SK-N-SH (cell line): ENCODE measurements at regions of chr12 and their contacts with region 1.

Region 1: GRCh38 chr12:71685914-71686665 is at the start of gene TMEM19:
- DNase-seq: peak; percentile 91
- H3K4me3 ChIP-seq: peak within 1 kb of the TSS; percentile 69 to 76
- H3K27ac ChIP-seq: peak within 1 kb of the TSS; percentile 86 to 96
- H3K4me1 ChIP-seq: peaks cover 2 to 7% of the 10 kb centered on the region in 2 experiments; a peak in 3 of 4 replicates
- H3K27me3 ChIP-seq: no peaks in the 10 kb centered on the region
- CTCF ChIP-seq: peak; percentile 41
- EP300 ChIP-seq: no peak
- RAD21 ChIP-seq: peak; percentile 46
- polyA plus RNA-seq, gene TMEM19: 12.6 and 17.4 TPM in 2 replicates

Region 2: DNA sequence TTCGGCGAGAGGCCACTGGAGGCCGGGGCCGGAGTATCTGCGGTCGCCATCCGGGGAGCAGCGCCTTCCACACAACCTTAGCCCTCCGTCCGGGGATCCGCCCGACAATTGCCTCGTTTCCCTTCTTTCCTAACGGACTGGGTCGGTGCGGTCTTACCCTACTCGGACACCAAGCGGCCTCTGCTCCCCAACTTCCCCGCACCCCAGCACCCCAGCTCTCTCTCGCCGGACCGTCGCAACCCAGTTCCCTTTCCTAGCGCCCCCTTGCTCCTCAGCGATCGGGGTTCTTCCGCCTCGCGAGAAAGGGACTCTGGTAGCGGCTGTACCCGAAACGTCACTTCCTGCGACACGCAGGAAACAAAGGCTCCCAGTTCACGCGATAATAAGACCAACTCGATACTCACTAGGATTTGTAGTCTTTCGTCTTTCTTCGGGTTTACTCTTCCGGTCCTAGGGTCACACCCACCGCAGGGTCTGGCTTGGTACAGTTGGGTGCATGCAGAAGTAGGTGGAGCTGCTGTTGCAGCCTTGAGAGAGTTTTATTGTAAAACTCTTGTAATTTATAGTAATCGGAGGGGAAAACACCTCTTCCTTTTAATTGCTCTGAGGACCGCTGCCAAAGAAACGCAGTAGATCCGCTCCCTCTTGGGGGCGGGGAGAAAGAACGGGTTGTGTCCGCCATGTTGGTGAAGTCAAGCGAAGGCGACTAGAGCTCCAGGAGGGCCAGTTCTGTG is 22.4 kb before region 1 on chr12 and contains the start of gene ZFC3H1:
- CTCF ChIA-PET with region 1: interaction called, 18 read pairs
- POLR2A ChIA-PET with region 1: interaction called, 38 read pairs
- DNase-seq: peak; percentile 88
- H3K4me3 ChIP-seq: peak within 1 kb of the TSS; percentile 85 to 98
- H3K27ac ChIP-seq: peak within 1 kb of the TSS; percentile 88 to 99
- H3K4me1 ChIP-seq: peaks cover 5 to 12% of the 10 kb centered on the region in 2 experiments; a peak in 3 of 4 replicates
- H3K27me3 ChIP-seq: no peaks in the 10 kb centered on the region
- CTCF ChIP-seq: peak; percentile 42
- EP300 ChIP-seq: no peak; a peak in 1 of 4 replicates
- RAD21 ChIP-seq: no peak
- polyA plus RNA-seq, gene ZFC3H1: 19.1 and 32.0 TPM in 2 replicates

Region 3: GRCh38 chr12:71702590-71702989 is 16.5 kb after region 1 on chr12:
- CTCF ChIA-PET with region 1: interaction called, 10 read pairs
- POLR2A ChIA-PET with region 1: no interaction called
- DNase-seq: no peak
- H3K4me3 ChIP-seq: no peak overlapping the region
- H3K27ac ChIP-seq: no peak overlapping the region
- H3K4me1 ChIP-seq: no peaks in the 10 kb centered on the region
- H3K27me3 ChIP-seq: no peaks in the 10 kb centered on the region
- CTCF ChIP-seq: no peak
- EP300 ChIP-seq: no peak
- RAD21 ChIP-seq: no peak